HCT116 (cell line): ENCODE measurements at regions of chr18 and their contacts with region 1.

Region 1: DNA sequence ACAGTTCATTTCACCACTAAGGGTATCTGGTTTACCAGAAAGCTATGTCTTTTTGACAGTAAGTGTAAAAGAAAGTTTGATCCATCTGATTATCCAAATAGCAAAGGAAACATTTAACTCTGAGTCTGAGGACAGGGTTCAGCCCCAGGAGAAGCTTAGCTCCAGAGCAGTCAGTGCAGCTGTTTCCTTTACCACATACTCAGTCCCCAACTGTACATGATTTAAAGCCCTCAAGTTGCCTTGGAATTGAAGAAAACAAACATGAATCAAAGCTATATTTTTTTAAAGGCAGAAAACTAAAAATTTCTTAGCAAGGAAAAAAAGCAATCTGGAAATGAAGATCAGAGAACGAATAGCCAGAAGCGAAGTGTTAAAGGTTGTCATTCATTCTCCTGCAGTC is 746.0 kb downstream of the METTL4 start:
- DNase-seq: no peak
- ATAC-seq: no peak
- H3K4me3 ChIP-seq: no peak overlapping the region
- H3K27ac ChIP-seq: no peak overlapping the region
- H3K4me1 ChIP-seq: no peaks in the 10 kb centered on the region
- H3K27me3 ChIP-seq: no peaks in the 10 kb centered on the region
- CTCF ChIP-seq: no peak
- POLR2A ChIP-seq: no peak
- RAD21 ChIP-seq: no peak

Region 2: GRCh38 chr18:1618364-1618763 is 206.9 kb before region 1 on chr18:
- CTCF ChIA-PET with region 1: no interaction called
- POLR2A ChIA-PET with region 1: no interaction called
- RAD21 ChIA-PET with region 1: no interaction called
- intact Hi-C with region 1: no loop called
- DNase-seq: no peak
- ATAC-seq: no peak
- H3K4me3 ChIP-seq: no peak overlapping the region
- H3K27ac ChIP-seq: no peak overlapping the region
- H3K4me1 ChIP-seq: no peaks in the 10 kb centered on the region
- H3K27me3 ChIP-seq: 0 out of 2 replicates have a peak, but pooled peaks cover 9% of the 10 kb centered on the region
- CTCF ChIP-seq: no peak
- POLR2A ChIP-seq: no peak
- RAD21 ChIP-seq: no peak

Region 3: DNA sequence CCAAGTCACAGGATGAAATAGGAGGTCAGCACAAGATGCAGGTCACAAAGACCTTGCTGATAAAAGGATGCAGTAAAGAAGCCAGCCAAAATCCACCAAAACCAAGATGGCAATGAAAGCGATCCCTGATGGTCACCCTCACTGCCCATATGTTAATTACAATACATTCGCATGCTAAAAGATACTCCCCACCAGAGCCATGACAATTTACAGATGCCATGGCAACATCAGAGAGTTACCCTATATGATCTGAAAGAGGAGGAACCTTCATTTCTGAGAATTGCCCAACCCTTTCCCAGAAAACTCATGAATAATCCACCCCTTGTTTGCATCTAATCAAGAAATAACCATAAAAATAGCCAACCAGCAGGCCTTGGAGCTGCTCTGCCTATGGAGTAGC is 36.2 kb after region 1 on chr18:
- CTCF ChIA-PET with region 1: no interaction called
- POLR2A ChIA-PET with region 1: no interaction called
- RAD21 ChIA-PET with region 1: no interaction called
- intact Hi-C with region 1: loop called (anchors 5 kb)
- DNase-seq: no peak
- ATAC-seq: no peak
- H3K4me3 ChIP-seq: no peak overlapping the region
- H3K27ac ChIP-seq: no peak overlapping the region
- H3K4me1 ChIP-seq: no peaks in the 10 kb centered on the region
- H3K27me3 ChIP-seq: no peaks in the 10 kb centered on the region
- CTCF ChIP-seq: no peak
- POLR2A ChIP-seq: no peak
- RAD21 ChIP-seq: no peak